Naive thymus-derived CD4-positive, alpha-beta T cell (primary cell): ENCODE measurements at regions of chr1 and their contacts with region 1.

Region 1: GRCh38 chr1:114780344-114781226 is at the start of gene SIKE1:
- DNase-seq: peak; percentile 82 to 98 (median 95)
- ATAC-seq: peak; percentile 99
- H3K4me3 ChIP-seq: peak within 1 kb of the TSS; percentile 78
- H3K4me3 Mint-ChIP-seq: peak within 1 kb of the TSS; percentile 98 to 100 (median 100)
- H3K27ac ChIP-seq: peak within 1 kb of the TSS; percentile 87
- H3K27ac Mint-ChIP-seq: peak within 1 kb of the TSS; percentile 96 to 100 (median 99)
- H3K4me1 ChIP-seq: peaks cover 0 to 8% of the 10 kb centered on the region in 2 donors
- H3K4me1 Mint-ChIP-seq: peaks cover 19 to 40% (median 30%) of the 10 kb centered on the region in 7 donors
- H3K27me3 ChIP-seq: no peaks in the 10 kb centered on the region
- H3K27me3 Mint-ChIP-seq: peaks cover 0 to 17% (median 0%) of the 10 kb centered on the region in 5 donors
- total RNA-seq, gene SIKE1: 43.4 to 69.4 (median 61.2) TPM

Region 2: DNA sequence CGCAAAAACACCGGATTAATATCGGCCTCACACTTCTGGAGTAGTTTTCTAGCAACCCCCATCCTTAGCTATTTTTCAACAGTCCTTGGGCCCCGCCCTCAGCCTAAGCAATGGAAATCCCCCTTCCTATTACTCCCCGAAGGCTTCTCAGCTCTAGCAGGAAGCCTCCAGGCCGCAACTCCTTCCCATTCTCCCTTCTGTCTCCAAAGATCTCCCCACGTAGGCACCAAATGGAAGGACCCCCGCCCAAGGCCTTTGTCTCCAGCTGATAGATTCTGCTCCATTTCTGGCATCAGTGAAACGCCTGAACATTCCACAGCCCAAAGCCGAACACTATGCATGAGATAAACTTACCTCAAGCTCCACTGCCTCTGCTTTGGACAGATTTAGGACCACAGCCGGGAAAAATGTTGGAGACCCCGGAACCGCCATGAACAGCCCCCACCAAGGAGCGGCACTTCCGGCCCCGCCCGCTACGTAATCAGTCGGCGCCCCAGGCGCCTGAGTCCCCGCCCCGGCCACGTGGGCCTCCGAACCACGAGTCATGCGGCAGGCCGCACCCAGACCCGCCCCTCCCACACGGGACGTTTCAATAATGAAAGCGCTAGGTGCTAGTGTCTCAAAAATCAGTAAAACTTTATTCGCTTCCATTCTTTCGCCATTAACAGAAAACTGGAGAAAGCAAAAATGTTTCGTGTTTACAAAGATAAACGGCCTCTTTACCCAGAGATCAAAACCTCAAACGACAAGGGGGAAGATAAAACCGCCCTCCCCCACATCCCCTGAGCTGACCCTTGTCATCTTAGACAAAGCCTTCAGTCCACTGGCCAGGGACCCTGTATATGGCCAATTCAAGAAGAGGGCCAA is 64.0 kb before region 1 on chr1 and contains the start of gene NRAS:
- CTCF ChIA-PET with region 1: no interaction called
- POLR2A ChIA-PET with region 1: interaction called, 16 read pairs
- intact Hi-C with region 1: loop called (anchors 1 kb)
- DNase-seq: peak; percentile 90 to 96 (median 94)
- ATAC-seq: peak; percentile 98
- H3K4me3 ChIP-seq: peak within 1 kb of the TSS; percentile 98
- H3K4me3 Mint-ChIP-seq: peak within 1 kb of the TSS; percentile 91 to 100 (median 96)
- H3K27ac ChIP-seq: peak within 1 kb of the TSS; percentile 98
- H3K27ac Mint-ChIP-seq: peak within 1 kb of the TSS; percentile 93 to 99 (median 97)
- H3K4me1 ChIP-seq: peaks cover 17 to 20% of the 10 kb centered on the region in 2 donors
- H3K4me1 Mint-ChIP-seq: peaks cover 10 to 34% (median 25%) of the 10 kb centered on the region in 7 donors
- H3K27me3 ChIP-seq: no peaks in the 10 kb centered on the region
- H3K27me3 Mint-ChIP-seq: no peaks in the 10 kb centered on the region
- total RNA-seq, gene NRAS: 22.3 to 56.0 (median 25.0) TPM

Region 3: GRCh38 chr1:114794038-114794437 is 13.5 kb after region 1 on chr1:
- CTCF ChIA-PET with region 1: no interaction called
- POLR2A ChIA-PET with region 1: no interaction called
- intact Hi-C with region 1: no loop called
- DNase-seq: no peak
- ATAC-seq: no peak
- H3K4me3 ChIP-seq: no peak overlapping the region
- H3K4me3 Mint-ChIP-seq: no peak overlapping the region
- H3K27ac ChIP-seq: no peak overlapping the region
- H3K27ac Mint-ChIP-seq: no peak overlapping the region
- H3K4me1 ChIP-seq: no peaks in the 10 kb centered on the region
- H3K4me1 Mint-ChIP-seq: peaks cover 0 to 1% (median 0%) of the 10 kb centered on the region in 7 donors
- H3K27me3 ChIP-seq: no peaks in the 10 kb centered on the region
- H3K27me3 Mint-ChIP-seq: peaks cover 10 to 40% (median 37%) of the 10 kb centered on the region in 5 donors